PC-3 (cell line): ENCODE measurements at regions of chr2 and their contacts with region 1.

Region 1: DNA sequence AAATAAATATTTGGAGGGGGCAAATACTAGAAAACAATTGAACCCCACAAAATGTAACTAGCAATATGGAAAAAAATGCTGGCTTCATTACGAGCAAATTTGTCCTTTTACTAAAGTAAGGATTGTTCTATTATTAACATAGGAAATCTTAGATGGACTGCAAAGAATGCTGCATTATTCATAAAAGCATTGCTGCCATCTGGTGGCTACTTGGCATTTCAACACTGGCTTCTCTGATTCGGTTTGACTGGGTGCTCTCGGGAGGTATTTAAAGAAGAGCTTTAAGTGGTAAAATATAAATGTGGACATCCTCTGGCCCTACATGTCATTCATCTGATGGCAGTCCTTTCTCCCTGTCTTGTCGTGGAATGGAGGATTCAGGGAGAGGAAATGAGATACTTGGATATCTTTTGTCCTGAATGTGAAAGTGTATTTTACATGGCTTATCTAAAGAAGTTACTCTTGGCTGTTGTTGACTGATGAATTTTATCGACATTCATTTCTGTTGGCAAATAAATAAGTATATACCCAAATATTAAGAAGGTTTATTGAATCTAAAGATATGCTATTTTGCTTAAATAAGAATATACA is 130.2 kb downstream of the ARHGAP15 start:
- DNase-seq: peak; percentile 81
- ATAC-seq: peak; percentile 84
- H3K4me3 ChIP-seq: no peak overlapping the region
- H3K27ac ChIP-seq: no peak overlapping the region
- H3K4me1 ChIP-seq: no peaks in the 10 kb centered on the region
- H3K27me3 ChIP-seq: peaks cover 22% of the 10 kb centered on the region
- CTCF ChIP-seq: peak; percentile 89

Region 2: DNA sequence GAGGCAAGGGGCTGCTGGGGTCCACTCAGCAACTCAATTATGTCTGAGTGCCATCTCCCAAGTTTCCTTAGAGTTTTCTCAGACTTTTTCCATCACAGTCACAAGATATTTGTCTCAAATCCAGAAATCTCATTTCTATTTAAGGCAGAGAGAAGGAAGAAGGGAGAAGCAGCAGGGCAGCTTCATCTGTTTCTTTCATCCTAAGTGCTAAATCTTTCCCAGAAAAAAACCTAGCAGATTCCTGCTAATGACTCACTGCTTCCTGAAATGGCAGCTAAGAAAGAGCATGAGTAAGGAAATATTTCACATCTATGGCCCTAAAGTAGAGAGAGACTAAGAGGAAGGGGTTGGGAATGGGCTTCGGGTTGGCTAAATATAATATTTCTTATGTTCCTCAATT is 294.0 kb before region 1 on chr2:
- CTCF ChIA-PET with region 1: no interaction called
- POLR2A ChIA-PET with region 1: no interaction called
- intact Hi-C with region 1: no loop called
- DNase-seq: peak; percentile 30
- ATAC-seq: no peak
- H3K4me3 ChIP-seq: no peak overlapping the region
- H3K27ac ChIP-seq: no peak overlapping the region
- H3K4me1 ChIP-seq: no peaks in the 10 kb centered on the region
- H3K27me3 ChIP-seq: no peaks in the 10 kb centered on the region
- CTCF ChIP-seq: no peak

Region 3: GRCh38 chr2:143110758-143111428 is 148.6 kb before region 1 on chr2:
- CTCF ChIA-PET with region 1: interaction called, 3 read pairs
- POLR2A ChIA-PET with region 1: no interaction called
- intact Hi-C with region 1: loop called (anchors 2 kb)
- DNase-seq: peak; percentile 78
- ATAC-seq: peak; percentile 74
- H3K4me3 ChIP-seq: no peak overlapping the region
- H3K27ac ChIP-seq: no peak overlapping the region
- H3K4me1 ChIP-seq: no peaks in the 10 kb centered on the region
- H3K27me3 ChIP-seq: peaks cover 25% of the 10 kb centered on the region
- CTCF ChIP-seq: peak; percentile 86

Region 4: GRCh38 chr2:143162123-143162837 is 97.2 kb before region 1 on chr2:
- CTCF ChIA-PET with region 1: interaction called, 3 read pairs
- POLR2A ChIA-PET with region 1: no interaction called
- intact Hi-C with region 1: loop called (anchors 1 kb)
- DNase-seq: peak; percentile 52
- ATAC-seq: peak; percentile 95
- H3K4me3 ChIP-seq: no peak overlapping the region
- H3K27ac ChIP-seq: no peak overlapping the region
- H3K4me1 ChIP-seq: no peaks in the 10 kb centered on the region
- H3K27me3 ChIP-seq: peaks cover 61% of the 10 kb centered on the region
- CTCF ChIP-seq: peak; percentile 74

Region 5: DNA sequence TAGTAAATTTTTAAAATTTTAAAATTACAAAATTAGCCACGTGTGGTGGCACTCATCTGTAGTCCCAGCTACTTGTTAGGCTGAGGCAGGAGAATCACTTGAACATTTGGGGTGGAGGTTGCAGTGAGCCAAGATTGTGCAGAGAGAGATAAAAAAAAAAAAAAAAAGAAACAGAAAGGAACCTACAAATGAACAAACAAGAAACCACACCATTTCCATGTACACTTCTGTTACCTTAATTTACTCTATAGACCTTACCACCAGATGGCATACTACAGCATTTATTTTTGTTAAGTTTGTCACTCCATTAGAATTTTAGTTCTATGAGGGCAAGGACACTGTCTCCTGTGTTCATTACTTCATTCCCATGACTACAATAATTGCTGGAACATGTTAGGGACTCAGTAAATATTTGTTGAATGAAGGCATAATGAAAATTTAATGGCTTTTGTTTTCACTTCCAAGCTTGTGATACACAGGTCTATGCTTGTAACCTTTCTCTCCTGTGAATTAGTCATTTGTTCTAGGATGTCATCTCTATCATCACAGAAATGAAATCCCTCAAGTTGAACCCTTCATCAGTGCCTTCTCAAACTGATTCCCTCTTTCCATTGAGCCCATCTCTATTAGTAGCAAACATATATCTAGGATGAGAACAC is 54.2 kb before region 1 on chr2:
- CTCF ChIA-PET with region 1: no interaction called
- POLR2A ChIA-PET with region 1: no interaction called
- intact Hi-C with region 1: loop called (anchors 1 kb)
- DNase-seq: peak; percentile 39
- ATAC-seq: peak; percentile 46; the same call in 1 of the 2 replicates
- H3K4me3 ChIP-seq: no peak overlapping the region
- H3K27ac ChIP-seq: no peak overlapping the region
- H3K4me1 ChIP-seq: no peaks in the 10 kb centered on the region
- H3K27me3 ChIP-seq: peaks cover 26% of the 10 kb centered on the region
- CTCF ChIP-seq: peak; percentile 60

Region 6: DNA sequence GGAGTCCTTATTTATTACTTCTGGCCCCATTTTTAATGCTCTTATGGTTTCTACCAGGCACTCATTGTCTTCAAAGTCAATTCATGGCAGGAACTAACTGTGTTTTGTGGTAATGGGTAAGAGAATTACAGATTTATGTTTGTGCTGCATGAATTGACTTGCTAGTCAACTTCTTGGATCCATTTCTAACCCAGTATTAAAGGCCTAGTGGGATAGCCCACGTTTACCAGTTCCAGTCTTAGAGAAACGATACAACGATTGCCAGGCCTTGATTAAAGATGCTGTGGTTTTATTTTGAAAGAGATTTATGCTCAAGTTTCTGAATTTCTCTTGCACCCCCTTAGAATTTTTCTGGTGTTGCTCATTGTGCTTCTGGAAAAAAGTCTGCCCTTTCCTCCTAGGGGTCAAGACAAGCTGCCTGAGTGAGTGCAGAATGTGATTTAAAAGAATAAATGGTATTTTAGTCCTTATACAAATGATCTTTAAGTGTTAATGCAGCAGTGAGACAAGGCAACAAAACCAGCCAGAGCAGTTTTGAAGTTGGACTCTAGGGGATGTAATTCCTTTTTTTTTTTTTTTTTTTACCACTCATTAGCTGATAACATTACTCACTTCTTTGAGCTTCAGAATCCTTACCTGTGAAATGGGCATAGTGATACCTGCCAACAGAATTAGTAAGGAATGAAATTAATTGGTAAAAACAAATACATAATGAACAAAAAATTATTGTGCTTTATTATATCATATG is 28.8 kb before region 1 on chr2:
- CTCF ChIA-PET with region 1: interaction called, 11 read pairs
- POLR2A ChIA-PET with region 1: no interaction called
- intact Hi-C with region 1: no loop called
- DNase-seq: no peak
- ATAC-seq: no peak
- H3K4me3 ChIP-seq: no peak overlapping the region
- H3K27ac ChIP-seq: no peak overlapping the region
- H3K4me1 ChIP-seq: no peaks in the 10 kb centered on the region
- H3K27me3 ChIP-seq: peaks cover 30% of the 10 kb centered on the region
- CTCF ChIP-seq: no peak

Region 7: DNA sequence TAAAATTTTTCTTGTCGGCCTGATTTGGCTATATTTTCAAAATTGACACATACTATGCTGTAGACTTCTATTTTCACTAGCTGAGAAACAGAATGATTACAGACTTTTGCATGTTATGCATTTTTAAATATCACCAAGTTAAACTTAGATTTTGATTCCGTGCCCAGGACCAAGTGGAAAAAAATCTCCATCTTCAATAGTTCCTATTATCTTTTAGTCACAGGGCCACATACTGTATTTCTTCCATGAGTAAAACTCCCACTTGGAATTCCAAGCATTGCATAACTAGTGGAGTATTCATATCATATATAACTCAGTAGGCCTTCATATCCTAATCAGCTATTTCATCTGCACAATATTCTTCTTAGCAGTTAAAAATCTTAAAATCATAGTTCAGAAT is 340.7 kb after region 1 on chr2:
- CTCF ChIA-PET with region 1: no interaction called
- POLR2A ChIA-PET with region 1: no interaction called
- intact Hi-C with region 1: no loop called
- DNase-seq: no peak
- ATAC-seq: no peak
- H3K4me3 ChIP-seq: no peak overlapping the region
- H3K27ac ChIP-seq: no peak overlapping the region
- H3K4me1 ChIP-seq: no peaks in the 10 kb centered on the region
- H3K27me3 ChIP-seq: no peaks in the 10 kb centered on the region
- CTCF ChIP-seq: no peak